A673 (cell line): ENCODE measurements at regions of chr17 and their contacts with region 1.

Region 1: GRCh38 chr17:54849660-54850059 is 51.0 kb upstream of the TOM1L1 start:
- DNase-seq: no peak
- H3K4me3 ChIP-seq: no peak overlapping the region
- H3K27ac ChIP-seq: no peak overlapping the region
- H3K4me1 ChIP-seq: no peaks in the 10 kb centered on the region
- H3K27me3 ChIP-seq: no peaks in the 10 kb centered on the region
- CTCF ChIP-seq: no peak

Region 2: GRCh38 chr17:54795046-54795445 is 54.6 kb before region 1 on chr17:
- CTCF ChIA-PET with region 1: no interaction called
- POLR2A ChIA-PET with region 1: no interaction called
- intact Hi-C with region 1: loop called (anchors 5 kb)
- DNase-seq: no peak
- H3K4me3 ChIP-seq: no peak overlapping the region
- H3K27ac ChIP-seq: no peak overlapping the region
- H3K4me1 ChIP-seq: no peaks in the 10 kb centered on the region
- H3K27me3 ChIP-seq: no peaks in the 10 kb centered on the region
- CTCF ChIP-seq: no peak

Region 3: GRCh38 chr17:54867634-54868033 is 18.0 kb after region 1 on chr17:
- CTCF ChIA-PET with region 1: no interaction called
- POLR2A ChIA-PET with region 1: no interaction called
- intact Hi-C with region 1: no loop called
- DNase-seq: no peak
- H3K4me3 ChIP-seq: no peak overlapping the region
- H3K27ac ChIP-seq: no peak overlapping the region
- H3K4me1 ChIP-seq: no peaks in the 10 kb centered on the region
- H3K27me3 ChIP-seq: no peaks in the 10 kb centered on the region
- CTCF ChIP-seq: no peak